Activated naive CD8-positive, alpha-beta T cell treated with anti-CD3 and anti-CD28 coated beads, Interleukin-2, amount 10 ng/mL, durations not matched to agents 7 days and 5 days (primary cell): ENCODE measurements at regions of chr1 and their contacts with region 1.

Region 1: GRCh38 chr1:84506002-84506728 is at the starts of genes GNG5 and SPATA1:
- DNase-seq: peak; percentile 99
- ATAC-seq: peak; percentile 91
- H3K4me3 Mint-ChIP-seq: peak within 1 kb of the TSS; percentile 99
- H3K27ac Mint-ChIP-seq: peak within 1 kb of the TSS; percentile 100
- H3K4me1 Mint-ChIP-seq: peaks cover 22% of the 10 kb centered on the region
- H3K27me3 Mint-ChIP-seq: no peaks in the 10 kb centered on the region
- total RNA-seq, gene GNG5: 88.0 to 88.4 TPM
- total RNA-seq, gene SPATA1: 3.3 to 4.0 TPM

Region 2: DNA sequence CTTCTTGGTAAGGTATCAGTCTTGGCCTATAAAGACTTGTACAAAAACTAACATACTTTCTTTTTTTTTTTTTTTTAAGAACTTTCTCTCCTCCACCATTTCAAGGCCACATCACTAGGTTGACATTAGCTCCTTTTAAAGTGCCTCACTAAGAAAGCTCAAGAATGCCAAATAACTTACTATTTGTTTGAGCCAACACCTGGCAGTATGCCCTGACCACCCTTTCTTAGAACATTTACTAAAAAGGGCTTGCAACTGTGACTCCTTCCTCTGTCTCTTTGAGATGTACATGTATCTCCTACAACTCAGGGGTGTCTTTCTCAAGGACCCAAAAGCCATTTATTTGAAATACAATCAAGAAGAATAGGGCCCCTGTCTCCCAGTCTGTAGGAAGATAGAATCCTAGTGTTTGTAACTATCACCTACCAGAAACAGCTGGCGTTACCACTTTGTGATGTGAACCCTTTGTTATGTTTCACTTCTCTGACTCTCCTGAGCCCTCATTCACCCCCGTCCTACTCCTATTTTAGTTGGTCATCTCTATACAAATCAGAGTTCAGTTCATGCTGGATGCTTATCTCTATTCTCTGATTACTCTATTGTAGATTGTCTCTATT is 216.9 kb before region 1 on chr1:
- POLR2A ChIA-PET with region 1: no interaction called
- DNase-seq: no peak
- ATAC-seq: no peak
- H3K4me3 Mint-ChIP-seq: no peak overlapping the region
- H3K27ac Mint-ChIP-seq: no peak overlapping the region
- H3K4me1 Mint-ChIP-seq: no peaks in the 10 kb centered on the region
- H3K27me3 Mint-ChIP-seq: peaks cover 4% of the 10 kb centered on the region

Region 3: DNA sequence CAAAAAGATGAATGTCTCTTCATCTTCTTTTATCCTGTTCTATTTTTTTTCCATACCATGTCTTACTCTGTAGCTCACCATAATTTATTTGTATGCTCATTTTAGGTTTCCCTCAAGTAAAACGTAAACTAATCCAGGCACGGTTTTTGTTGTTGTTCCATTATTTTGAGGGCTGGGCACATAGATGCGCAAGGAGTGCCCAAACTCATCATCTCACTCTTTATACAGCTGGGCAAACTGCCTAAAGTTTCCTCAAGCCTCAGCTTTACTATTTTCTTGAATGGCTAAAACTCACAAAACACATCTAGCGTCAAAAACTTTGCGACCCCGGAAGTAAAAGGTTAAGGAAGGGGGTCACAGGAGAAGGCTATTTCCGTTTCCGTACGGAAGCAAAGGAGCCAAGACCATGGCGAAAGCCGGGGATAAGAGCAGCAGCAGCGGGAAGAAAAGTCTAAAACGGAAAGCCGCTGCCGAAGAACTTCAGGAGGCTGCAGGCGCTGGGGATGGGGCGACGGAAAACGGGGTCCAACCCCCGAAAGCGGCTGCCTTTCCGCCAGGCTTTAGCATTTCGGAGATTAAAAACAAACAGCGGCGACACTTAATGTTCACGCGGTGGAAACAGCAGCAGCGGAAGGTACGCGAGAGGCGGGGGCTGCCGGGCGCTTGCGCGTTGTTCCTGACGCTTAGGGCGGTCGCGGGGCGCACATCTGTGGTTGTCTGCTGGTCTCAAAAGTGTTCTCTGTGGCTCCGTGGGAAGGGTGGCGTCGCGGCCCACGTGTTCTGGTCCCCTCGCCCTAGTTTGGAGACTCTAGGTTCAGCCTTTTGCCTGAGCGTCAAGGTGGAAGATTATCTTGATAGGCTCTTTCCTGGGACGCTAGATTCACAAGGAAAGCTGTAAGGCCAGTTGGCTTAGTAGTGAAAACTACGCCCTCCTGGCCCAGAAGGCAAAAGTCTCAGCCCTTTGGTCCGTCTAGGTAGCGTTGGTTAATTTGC is 27.0 kb before region 1 on chr1 and contains the start of gene RPF1:
- POLR2A ChIA-PET with region 1: interaction called, 42 read pairs
- DNase-seq: peak; percentile 81
- ATAC-seq: peak; percentile 98
- H3K4me3 Mint-ChIP-seq: peak within 1 kb of the TSS; percentile 96
- H3K27ac Mint-ChIP-seq: peak within 1 kb of the TSS; percentile 97
- H3K4me1 Mint-ChIP-seq: peaks cover 21% of the 10 kb centered on the region
- H3K27me3 Mint-ChIP-seq: peaks cover 25% of the 10 kb centered on the region
- total RNA-seq, gene RPF1: 34.8 to 36.2 TPM